ENCODE measurements at regions of chr20 and their contacts with region 1.

Region 1: DNA sequence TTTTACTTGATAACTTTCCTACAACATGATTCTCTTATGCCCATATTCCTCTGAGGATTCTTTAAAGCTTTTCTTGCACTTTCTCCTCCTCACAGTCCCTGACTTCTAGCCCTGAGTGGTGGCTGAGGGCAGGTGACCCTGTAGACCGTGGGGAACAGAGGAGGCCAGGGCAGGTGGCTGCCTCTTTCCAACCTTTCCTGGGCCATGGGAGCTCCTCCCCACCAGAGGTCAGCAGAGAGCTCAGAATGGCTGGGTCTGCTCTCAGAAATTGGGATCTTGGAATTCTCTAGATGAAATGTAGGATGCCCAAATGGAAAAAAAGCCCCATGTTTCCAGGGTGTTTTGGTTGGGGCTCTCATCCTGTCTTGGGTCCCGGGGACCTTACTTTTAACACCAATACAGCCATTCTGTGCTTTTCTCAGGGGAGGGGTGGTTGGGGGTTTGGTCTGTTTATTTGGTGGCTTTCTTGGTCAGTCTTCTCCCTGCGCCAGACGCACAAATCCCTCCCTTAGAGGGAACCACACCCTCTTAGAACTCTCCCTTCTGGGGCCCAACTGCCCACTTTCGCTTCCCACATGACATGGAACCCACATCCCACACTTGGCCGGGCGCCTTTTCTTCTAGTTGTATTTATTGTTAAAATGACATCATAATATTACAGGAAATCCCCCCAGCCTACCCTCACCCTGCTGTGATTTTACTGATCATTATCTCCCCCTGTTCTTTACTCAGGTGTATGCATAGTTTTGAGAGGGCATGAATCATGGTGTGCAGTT is 17.9 kb downstream of the GNAS start:
- DNase-seq: peak in 1 of 2 experiments; percentile 87
- H3K4me3 ChIP-seq: no peak overlapping the region
- H3K27ac ChIP-seq: no peak overlapping the region
- H3K4me1 ChIP-seq: peaks cover 0 to 3% (median 0%) of the 10 kb centered on the region in 4 experiments; a peak in 2 of 7 replicates
- H3K27me3 ChIP-seq: no peaks in the 10 kb centered on the region
- CTCF ChIP-seq: peak; percentile 86 to 90 (median 87)
- EP300 ChIP-seq: no peak
- POLR2A ChIP-seq: no peak
- RAD21 ChIP-seq: peak; percentile 85 to 86

Region 2: GRCh38 chr20:58850693-58851174 is 19.7 kb before region 1 on chr20 and contains the start of gene GNAS-AS1:
- CTCF ChIA-PET with region 1: interaction called, 13 read pairs
- POLR2A ChIA-PET with region 1: interaction called, 7 read pairs
- DNase-seq: peak; percentile 76 to 96
- H3K4me3 ChIP-seq: peak within 1 kb of the TSS; percentile 68 to 88 (median 78)
- H3K27ac ChIP-seq: peak within 1 kb of the TSS; percentile 87
- H3K4me1 ChIP-seq: peaks cover 0 to 32% (median 15%) of the 10 kb centered on the region in 4 experiments; a peak in 6 of 7 replicates
- H3K27me3 ChIP-seq: peaks cover 16 to 47% (median 41%) of the 10 kb centered on the region in 4 experiments
- CTCF ChIP-seq: peak in 2 of 3 experiments; percentile 9 to 11; a peak in 2 of 4 replicates
- EP300 ChIP-seq: no peak
- POLR2A ChIP-seq: no peak; a peak in 1 of 3 replicates
- RAD21 ChIP-seq: no peak
- total RNA-seq, gene GNAS-AS1: 11.7 and 13.7 TPM in 2 replicates

Region 3: GRCh38 chr20:58880994-58881752 is 10.7 kb after region 1 on chr20:
- CTCF ChIA-PET with region 1: interaction called, 61 read pairs
- POLR2A ChIA-PET with region 1: interaction called, 13 read pairs
- DNase-seq: no peak
- H3K4me3 ChIP-seq: no peak overlapping the region
- H3K27ac ChIP-seq: no peak overlapping the region
- H3K4me1 ChIP-seq: peaks cover 3 to 34% (median 26%) of the 10 kb centered on the region in 4 experiments
- H3K27me3 ChIP-seq: no peaks in the 10 kb centered on the region
- CTCF ChIP-seq: peak in 2 of 3 experiments; percentile 30 to 36; a peak in 2 of 4 replicates
- EP300 ChIP-seq: no peak
- POLR2A ChIP-seq: no peak
- RAD21 ChIP-seq: peak in 1 of 2 experiments; percentile 44; a peak in 3 of 4 replicates

Region 4: DNA sequence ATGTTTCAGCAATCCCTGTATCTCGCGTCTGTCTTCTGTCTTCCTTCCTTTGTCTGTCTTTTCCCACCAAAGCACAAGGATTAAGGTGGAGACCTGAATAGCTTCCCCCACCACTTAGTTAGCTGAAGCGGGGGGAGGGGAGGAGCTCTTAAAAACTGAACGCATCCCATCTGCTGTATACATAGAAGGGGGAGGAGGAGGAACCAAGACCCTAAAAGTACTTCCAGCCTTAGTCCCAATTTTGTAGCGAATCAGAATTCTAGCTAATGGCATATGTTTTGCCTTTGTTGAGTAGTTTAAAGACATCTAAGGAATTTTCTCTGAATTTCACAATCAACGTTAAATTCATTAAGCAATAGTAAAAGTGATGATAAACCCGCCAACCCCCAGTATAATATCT is 30.0 kb after region 1 on chr20:
- CTCF ChIA-PET with region 1: interaction called, 10 read pairs
- POLR2A ChIA-PET with region 1: interaction called, 3 read pairs
- DNase-seq: no peak
- H3K4me3 ChIP-seq: peak overlapping the region in 1 of 4 experiments; percentile 21; a peak in 1 of 8 replicates
- H3K27ac ChIP-seq: no peak overlapping the region
- H3K4me1 ChIP-seq: peaks cover 13 to 24% (median 20%) of the 10 kb centered on the region in 4 experiments
- H3K27me3 ChIP-seq: no peaks in the 10 kb centered on the region
- CTCF ChIP-seq: no peak
- EP300 ChIP-seq: no peak
- POLR2A ChIP-seq: 0 out of 3 replicates have a peak, but pooled peaks of 1 of the 2 experiments have one; percentile 1
- RAD21 ChIP-seq: no peak

Measured in H1 (cell line).